ENCODE measurements at regions of chr3 and their contacts with region 1.

Region 1: DNA sequence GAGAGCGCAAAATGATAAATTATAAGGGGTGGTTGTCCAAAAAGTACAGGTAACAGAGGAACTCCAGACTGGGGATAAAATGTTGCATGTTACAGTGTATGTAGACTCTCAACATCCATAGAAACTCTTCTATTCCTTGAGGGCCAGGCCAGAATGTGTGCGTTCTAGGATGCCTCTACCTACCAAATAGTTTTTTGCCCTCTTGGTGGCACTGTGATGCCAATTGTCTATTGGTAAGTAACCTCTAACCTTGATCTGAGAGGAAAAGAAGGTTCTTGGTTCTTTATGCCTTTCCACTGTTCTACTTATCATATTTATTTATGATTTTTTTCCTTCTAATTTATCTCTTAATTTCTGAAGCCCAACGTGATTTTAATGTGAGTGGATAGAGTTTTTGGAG is 424.6 kb downstream of the GRM7 start:
- DNase-seq: no peak
- ATAC-seq: no peak

Region 2: DNA sequence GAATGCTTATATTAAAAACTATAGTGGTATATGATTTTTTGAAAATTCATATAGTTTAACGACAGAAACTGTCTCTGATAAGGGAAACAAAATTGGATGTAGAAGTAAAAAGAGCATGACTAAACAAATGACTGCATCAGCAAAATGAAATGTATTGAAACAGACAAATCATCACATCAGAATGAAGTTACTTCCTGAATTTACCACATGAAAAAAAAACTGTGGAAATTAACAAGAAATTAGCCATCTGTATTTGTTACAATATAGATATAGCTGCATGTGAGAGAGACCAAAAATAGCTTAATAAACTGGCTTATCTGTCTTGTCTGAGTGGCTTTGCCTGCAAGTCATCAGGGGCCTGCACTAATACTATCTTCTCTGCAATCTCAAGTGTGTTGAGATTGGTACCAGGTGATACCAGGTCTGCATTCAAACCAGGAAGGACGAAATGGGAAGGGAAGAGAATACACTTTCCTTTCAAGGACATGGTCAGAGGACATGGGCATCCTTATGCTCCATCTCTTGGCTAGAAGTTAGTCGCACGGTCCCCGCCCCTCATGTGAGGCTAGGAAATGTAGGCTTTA is 35.9 kb before region 1 on chr3:
- intact Hi-C with region 1: no loop called
- DNase-seq: no peak
- ATAC-seq: no peak

Region 3: GRCh38 chr3:7546253-7546652 is 260.7 kb after region 1 on chr3:
- intact Hi-C with region 1: loop called (anchors 10 kb)
- DNase-seq: no peak
- ATAC-seq: peak; percentile 43